Caco-2 (cell line): ENCODE measurements at regions of chr13 and their contacts with region 1.

Region 1: GRCh38 chr13:36282818-36283445 is 14.7 kb downstream of the CCDC169 start:
- DNase-seq: peak in 1 of 2 experiments; percentile 16
- H3K4me3 ChIP-seq: no peak overlapping the region
- H3K4me3 Mint-ChIP-seq: no peak overlapping the region
- H3K27ac Mint-ChIP-seq: no peak overlapping the region
- H3K4me1 ChIP-seq: no peaks in the 10 kb centered on the region
- H3K4me1 Mint-ChIP-seq: no peaks in the 10 kb centered on the region
- H3K27me3 ChIP-seq: no peaks in the 10 kb centered on the region
- H3K27me3 Mint-ChIP-seq: peaks cover 3% of the 10 kb centered on the region
- CTCF ChIP-seq: peak; percentile 64 to 65

Region 2: GRCh38 chr13:34808649-34809048 is 1474.3 kb before region 1 on chr13:
- CTCF ChIA-PET with region 1: no interaction called
- POLR2A ChIA-PET with region 1: no interaction called
- intact Hi-C with region 1: no loop called
- DNase-seq: no peak
- H3K4me3 ChIP-seq: no peak overlapping the region
- H3K4me3 Mint-ChIP-seq: no peak overlapping the region
- H3K27ac Mint-ChIP-seq: no peak overlapping the region
- H3K4me1 ChIP-seq: no peaks in the 10 kb centered on the region
- H3K4me1 Mint-ChIP-seq: no peaks in the 10 kb centered on the region
- H3K27me3 ChIP-seq: no peaks in the 10 kb centered on the region
- H3K27me3 Mint-ChIP-seq: no peaks in the 10 kb centered on the region
- CTCF ChIP-seq: no peak

Region 3: DNA sequence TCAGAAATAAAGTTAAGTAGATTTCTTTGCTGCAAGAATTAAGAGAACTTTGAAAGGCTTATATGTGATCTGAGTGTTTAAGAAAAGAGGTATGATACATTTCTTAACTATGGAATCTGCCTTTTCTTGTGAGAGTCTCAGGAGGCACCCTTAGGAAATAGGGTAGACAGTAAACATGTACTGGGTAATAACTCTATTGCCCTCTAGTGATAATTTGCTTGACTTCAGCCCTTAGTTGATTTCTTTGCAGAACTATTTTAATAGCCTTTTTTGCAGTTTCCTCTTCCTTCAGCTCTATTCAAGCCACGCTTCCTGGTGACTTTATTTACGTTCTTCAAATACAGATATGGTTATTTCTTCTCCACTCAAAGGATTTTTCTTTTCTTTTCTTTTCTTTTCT is 112.3 kb after region 1 on chr13:
- CTCF ChIA-PET with region 1: interaction called, 3 read pairs
- POLR2A ChIA-PET with region 1: no interaction called
- intact Hi-C with region 1: loop called (anchors 1 kb)
- DNase-seq: no peak
- H3K4me3 ChIP-seq: no peak overlapping the region
- H3K4me3 Mint-ChIP-seq: no peak overlapping the region
- H3K27ac Mint-ChIP-seq: no peak overlapping the region
- H3K4me1 ChIP-seq: no peaks in the 10 kb centered on the region
- H3K4me1 Mint-ChIP-seq: no peaks in the 10 kb centered on the region
- H3K27me3 ChIP-seq: no peaks in the 10 kb centered on the region
- H3K27me3 Mint-ChIP-seq: no peaks in the 10 kb centered on the region
- CTCF ChIP-seq: no peak

Region 4: DNA sequence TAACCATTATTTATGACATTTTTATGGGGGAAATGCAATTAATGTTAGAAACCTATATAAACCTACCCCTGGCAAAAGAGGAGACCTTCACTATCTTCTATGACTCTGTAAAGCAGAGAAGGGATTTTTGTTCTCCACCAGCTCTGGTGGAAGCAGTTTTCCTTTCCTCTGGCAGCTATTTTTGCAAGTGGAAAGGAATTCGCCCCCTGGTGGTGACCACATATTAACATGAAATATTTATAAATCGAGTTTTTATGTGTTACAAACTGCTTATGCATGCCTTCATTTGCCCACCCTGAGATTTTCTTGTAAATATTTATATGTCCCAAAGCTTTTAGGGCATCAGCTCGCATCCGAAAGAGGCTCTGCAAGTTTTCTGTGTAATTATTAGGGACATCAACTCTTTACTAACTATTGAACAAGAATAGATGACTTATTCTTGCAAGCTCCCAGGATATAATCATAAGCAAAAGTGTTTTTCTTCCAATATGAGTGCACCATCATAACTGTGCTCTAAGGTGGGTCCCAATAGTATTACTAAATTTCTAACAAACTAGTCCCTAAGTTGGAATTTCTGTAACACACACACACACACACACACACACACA is 453.3 kb after region 1 on chr13:
- CTCF ChIA-PET with region 1: interaction called, 5 read pairs
- POLR2A ChIA-PET with region 1: no interaction called
- intact Hi-C with region 1: loop called (anchors 1 kb)
- DNase-seq: peak in 1 of 2 experiments; percentile 58
- H3K4me3 ChIP-seq: no peak overlapping the region
- H3K4me3 Mint-ChIP-seq: no peak overlapping the region
- H3K27ac Mint-ChIP-seq: no peak overlapping the region
- H3K4me1 ChIP-seq: no peaks in the 10 kb centered on the region
- H3K4me1 Mint-ChIP-seq: no peaks in the 10 kb centered on the region
- H3K27me3 ChIP-seq: no peaks in the 10 kb centered on the region
- H3K27me3 Mint-ChIP-seq: peaks cover 10% of the 10 kb centered on the region
- CTCF ChIP-seq: peak; percentile 65 to 83

Region 5: GRCh38 chr13:36981156-36981743 is 698.3 kb after region 1 on chr13:
- CTCF ChIA-PET with region 1: no interaction called
- POLR2A ChIA-PET with region 1: no interaction called
- intact Hi-C with region 1: loop called (anchors 5 kb)
- DNase-seq: no peak
- H3K4me3 ChIP-seq: no peak overlapping the region
- H3K4me3 Mint-ChIP-seq: no peak overlapping the region
- H3K27ac Mint-ChIP-seq: no peak overlapping the region
- H3K4me1 ChIP-seq: no peaks in the 10 kb centered on the region
- H3K4me1 Mint-ChIP-seq: no peaks in the 10 kb centered on the region
- H3K27me3 ChIP-seq: no peaks in the 10 kb centered on the region
- H3K27me3 Mint-ChIP-seq: no peaks in the 10 kb centered on the region
- CTCF ChIP-seq: peak in 1 of 2 experiments; percentile 39